Heart right ventricle (tissue), 16 donors: ENCODE measurements at regions of chr12 and their contacts with region 1.

Region 1: DNA sequence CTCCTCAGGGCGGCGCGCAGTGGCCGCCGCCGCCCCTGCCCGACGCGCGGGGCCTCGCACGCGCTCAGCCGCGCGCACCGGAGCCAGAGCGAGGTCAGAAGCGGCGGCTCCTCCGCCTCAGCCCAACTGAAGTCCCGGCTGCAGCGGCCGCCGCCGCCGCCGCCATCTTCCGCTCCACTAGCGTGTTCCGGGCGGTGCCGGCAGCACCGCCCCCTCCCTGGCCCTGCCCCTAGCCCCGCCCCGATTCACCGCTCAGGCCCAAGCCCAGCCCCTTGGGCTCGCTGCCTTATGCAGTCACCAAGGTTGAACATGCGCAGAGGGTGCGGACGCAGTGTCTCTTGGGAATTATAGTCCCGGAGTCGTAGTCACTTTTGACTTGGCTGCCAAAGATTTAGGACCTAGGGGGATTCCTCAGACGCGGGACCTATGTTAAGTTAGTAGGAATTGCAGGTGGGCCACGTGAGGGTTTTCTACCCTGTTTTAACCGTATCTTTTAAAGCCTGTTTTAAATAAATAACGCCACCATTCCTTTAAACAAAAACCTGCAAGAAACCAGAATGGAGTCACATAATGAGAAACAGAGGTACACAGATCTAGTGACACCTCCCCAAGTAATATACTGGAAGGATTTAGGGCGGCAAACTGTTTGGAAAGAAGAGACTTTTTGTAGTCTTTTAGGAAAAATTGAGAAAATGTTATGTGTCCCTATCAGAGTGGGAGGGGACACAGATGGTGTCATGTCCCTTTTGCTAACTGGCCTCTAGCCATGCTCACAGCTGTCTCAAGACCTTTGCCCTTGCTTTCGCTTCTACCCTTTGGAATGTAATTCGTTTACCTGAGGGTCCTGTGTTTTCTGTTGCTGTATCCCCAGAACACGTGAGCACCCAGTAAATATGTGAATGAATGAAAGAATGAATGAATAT is at the start of gene PPTC7:
- DNase-seq: peak; percentile 98
- ATAC-seq: peak; percentile 93 to 99 (median 98)
- H3K4me3 ChIP-seq: peak within 1 kb of the TSS; percentile 58 to 98 (median 88)
- H3K27ac ChIP-seq: peak within 1 kb of the TSS; percentile 91 to 97 (median 95)
- H3K4me1 ChIP-seq: peaks cover 10 to 65% (median 53%) of the 10 kb centered on the region in 9 donors
- H3K27me3 ChIP-seq: no peaks in the 10 kb centered on the region
- CTCF ChIP-seq: no peak
- total RNA-seq, gene PPTC7: 66.0 to 162 (median 79.4) TPM

Region 2: GRCh38 chr12:110537605-110538409 is 45.6 kb before region 1 on chr12:
- intact Hi-C with region 1: loop called in 4 of 10 experiments (anchors 2 to 5 kb)
- DNase-seq: peak; percentile 55 to 62
- ATAC-seq: peak; percentile 78 to 92 (median 84)
- H3K4me3 ChIP-seq: no peak overlapping the region
- H3K27ac ChIP-seq: peak overlapping the region; percentile 64 to 86 (median 81)
- H3K4me1 ChIP-seq: peaks cover 5 to 79% (median 24%) of the 10 kb centered on the region in 9 donors
- H3K27me3 ChIP-seq: no peaks in the 10 kb centered on the region
- CTCF ChIP-seq: no peak

Region 3: DNA sequence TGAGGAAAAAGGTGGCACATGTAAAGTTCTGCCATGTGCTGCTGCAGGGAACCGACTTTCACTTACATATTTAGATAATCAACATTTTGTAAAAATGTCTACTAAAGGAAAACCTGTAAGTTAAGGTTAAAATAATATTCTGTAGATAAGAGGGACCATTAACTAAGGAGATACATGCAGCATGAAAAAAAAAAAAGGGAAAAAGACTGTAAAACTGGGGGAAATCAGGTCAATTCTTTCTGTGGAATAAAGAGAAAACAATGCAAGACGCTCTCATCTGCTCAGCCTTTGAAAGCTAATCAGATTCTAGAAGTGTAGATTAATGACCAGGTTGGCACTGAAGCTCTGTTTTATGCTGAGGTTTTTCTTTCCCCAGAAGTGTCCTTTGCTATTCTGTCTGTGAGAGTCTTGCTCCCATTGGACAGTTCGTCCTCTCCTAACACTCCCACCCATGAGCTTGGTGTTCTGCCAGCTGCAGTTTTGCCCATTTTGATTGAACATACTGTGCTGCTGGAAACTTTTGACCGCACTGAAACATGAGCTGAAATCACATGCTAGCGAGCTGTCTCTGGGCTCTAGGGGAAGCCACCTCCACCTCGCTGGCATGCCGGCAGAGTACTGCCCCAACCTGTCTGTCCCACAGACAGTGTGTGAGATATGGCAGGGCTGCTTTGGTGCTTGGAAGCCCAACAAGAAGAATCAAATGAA is 40.0 kb before region 1 on chr12:
- intact Hi-C with region 1: loop called in 6 of 10 experiments (anchors 2 to 5 kb)
- DNase-seq: peak; percentile 71 to 86
- ATAC-seq: peak; percentile 37 to 96 (median 85)
- H3K4me3 ChIP-seq: no peak overlapping the region
- H3K27ac ChIP-seq: peak overlapping the region; percentile 35 to 83 (median 66)
- H3K4me1 ChIP-seq: peaks cover 12 to 75% (median 53%) of the 10 kb centered on the region in 9 donors
- H3K27me3 ChIP-seq: no peaks in the 10 kb centered on the region
- CTCF ChIP-seq: no peak

Region 4: DNA sequence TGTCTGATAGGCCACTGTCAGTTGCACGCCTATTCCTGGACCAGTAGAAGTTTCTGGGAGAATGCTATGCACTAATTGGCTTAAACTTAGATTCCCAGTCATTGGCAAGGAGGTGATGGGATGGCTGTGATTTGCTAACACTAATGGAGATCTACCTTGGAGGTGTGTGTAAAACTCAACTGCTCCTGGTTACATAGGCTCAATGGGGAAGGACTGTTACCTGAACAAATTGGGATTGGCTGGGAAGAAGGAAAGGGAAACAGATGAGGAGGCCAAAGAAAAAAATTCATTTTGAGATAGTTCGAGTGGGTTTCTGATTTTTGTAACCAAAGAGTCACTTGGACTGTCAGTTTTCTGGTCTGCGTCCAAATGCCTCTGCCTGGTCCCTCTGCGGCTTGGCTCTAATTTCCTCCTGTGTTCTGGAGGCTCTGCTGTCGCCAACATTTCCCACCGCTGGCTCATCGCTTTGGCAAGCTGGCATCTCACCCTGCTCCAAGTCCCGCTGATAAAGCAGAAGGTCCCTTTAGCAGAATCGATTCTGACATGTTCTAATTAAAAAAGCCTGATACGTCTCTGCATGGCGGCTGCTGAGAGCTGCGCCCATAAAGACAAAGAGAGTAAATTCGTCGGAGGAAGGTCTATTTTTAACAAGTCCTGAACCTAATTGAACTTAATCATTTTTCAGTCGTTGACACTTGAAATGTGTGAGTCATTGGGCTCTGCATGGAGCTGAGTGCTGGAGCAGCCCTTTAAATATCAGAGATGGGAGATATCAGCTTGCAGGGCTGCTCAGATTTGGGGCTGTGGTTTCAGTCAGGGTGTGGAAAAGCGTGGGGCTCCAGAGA is 261.4 kb after region 1 on chr12:
- intact Hi-C with region 1: no loop called
- DNase-seq: peak; percentile 59 to 70
- ATAC-seq: peak; percentile 40 to 89 (median 84)
- H3K4me3 ChIP-seq: no peak overlapping the region
- H3K27ac ChIP-seq: peak overlapping the region; percentile 9 to 77 (median 60)
- H3K4me1 ChIP-seq: peaks cover 0 to 31% (median 12%) of the 10 kb centered on the region in 9 donors
- H3K27me3 ChIP-seq: peaks cover 0 to 34% (median 5%) of the 10 kb centered on the region in 7 donors
- CTCF ChIP-seq: no peak